ENCODE measurements at regions of chr12 and their contacts with region 1.

Region 1: DNA sequence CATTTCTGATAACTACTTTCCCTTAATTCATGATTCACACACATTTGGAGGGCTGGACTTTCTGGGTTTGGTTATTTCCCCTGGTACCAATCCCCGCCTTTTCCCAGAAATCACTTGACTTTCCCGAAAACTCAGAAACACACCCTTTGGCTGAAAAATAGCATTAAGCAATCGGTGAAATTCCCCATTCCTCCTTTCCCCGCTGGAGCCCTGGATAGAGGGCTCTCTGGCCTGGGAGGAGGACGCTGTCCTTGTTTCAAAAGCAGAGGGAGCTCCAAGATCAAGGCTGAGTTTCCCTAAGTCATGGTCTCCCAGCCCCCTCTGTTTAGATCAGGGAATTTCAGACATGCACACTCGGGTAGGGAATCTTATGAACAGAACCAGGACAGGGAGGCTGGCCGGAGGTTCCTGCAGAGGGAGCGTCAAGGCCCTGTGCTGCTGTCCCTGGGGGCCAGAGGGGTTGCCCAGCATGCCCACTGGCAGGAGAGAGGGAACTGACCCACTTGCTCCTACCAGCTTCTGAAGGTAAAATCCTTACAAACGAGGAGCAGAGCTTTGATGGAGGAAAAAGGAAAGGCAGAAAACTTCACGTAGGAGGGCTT is at the start of gene C1S:
- DNase-seq: peak; percentile 97
- H3K4me3 ChIP-seq: peak within 1 kb of the TSS; percentile 69
- H3K27ac ChIP-seq: peak within 1 kb of the TSS; percentile 94
- H3K27me3 ChIP-seq: peaks cover 3% of the 10 kb centered on the region
- CTCF ChIP-seq: peak; percentile 92
- polyA plus RNA-seq, gene C1S: 406 and 458 TPM in 2 replicates

Region 2: DNA sequence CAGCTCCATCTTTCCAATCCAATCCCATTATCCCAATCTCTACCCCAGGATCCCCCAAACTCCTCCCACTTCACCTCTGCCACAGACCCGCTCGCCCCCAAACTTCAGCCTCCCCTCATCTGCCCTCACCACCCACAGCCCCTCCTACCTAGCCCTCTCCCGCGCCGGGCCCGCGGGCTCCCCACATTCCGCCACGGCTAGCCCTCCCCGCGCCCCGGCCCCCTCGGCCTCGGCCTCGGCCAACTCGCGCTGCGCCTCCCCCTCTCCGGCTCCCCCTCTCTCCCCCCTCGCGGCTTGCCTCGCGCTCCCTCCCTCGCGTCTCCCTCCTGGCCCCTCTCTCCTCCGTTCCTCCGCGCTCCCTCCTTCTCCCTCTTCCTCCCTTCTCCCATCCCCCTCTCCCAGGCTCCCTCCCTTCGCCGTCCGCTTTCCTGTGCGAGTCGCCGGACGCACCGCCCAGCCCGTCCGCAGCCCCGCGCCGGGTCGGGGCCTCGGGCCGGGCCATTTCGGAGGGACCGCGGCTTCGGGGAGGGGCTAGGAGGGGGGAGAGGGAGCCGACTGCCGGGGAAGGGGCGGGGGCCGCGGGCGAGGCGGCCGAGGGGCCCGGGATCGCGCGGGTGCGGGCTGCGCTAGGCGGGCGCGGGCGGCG is 133.0 kb before region 1 on chr12 and contains the start of gene ATN1:
- CTCF ChIA-PET with region 1: no interaction called
- POLR2A ChIA-PET with region 1: no interaction called
- DNase-seq: peak; percentile 47
- H3K4me3 ChIP-seq: peak within 1 kb of the TSS; percentile 68
- H3K27ac ChIP-seq: peak within 1 kb of the TSS; percentile 90
- H3K27me3 ChIP-seq: no peaks in the 10 kb centered on the region
- CTCF ChIP-seq: no peak
- polyA plus RNA-seq, gene ATN1: 11.2 and 21.4 TPM in 2 replicates

Region 3: DNA sequence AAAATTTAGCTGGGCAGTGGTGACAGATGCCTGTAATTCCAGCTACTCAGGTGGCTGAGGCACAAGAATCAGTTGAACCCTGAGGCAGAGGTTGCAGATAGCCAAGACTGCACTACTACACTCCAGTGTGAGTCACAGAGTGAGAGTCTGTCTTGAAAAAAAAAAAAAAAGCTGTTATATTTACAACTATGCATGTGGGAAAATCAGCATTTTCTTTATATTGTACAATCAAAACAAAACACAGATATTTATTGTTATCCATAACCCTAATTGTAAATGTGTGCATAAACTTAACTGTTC is 19.3 kb after region 1 on chr12:
- CTCF ChIA-PET with region 1: interaction called, 12 read pairs
- POLR2A ChIA-PET with region 1: interaction called, 11 read pairs
- DNase-seq: peak; percentile 23
- H3K4me3 ChIP-seq: no peak overlapping the region
- H3K27ac ChIP-seq: peak overlapping the region; percentile 88
- H3K27me3 ChIP-seq: no peaks in the 10 kb centered on the region
- CTCF ChIP-seq: no peak

Region 4: DNA sequence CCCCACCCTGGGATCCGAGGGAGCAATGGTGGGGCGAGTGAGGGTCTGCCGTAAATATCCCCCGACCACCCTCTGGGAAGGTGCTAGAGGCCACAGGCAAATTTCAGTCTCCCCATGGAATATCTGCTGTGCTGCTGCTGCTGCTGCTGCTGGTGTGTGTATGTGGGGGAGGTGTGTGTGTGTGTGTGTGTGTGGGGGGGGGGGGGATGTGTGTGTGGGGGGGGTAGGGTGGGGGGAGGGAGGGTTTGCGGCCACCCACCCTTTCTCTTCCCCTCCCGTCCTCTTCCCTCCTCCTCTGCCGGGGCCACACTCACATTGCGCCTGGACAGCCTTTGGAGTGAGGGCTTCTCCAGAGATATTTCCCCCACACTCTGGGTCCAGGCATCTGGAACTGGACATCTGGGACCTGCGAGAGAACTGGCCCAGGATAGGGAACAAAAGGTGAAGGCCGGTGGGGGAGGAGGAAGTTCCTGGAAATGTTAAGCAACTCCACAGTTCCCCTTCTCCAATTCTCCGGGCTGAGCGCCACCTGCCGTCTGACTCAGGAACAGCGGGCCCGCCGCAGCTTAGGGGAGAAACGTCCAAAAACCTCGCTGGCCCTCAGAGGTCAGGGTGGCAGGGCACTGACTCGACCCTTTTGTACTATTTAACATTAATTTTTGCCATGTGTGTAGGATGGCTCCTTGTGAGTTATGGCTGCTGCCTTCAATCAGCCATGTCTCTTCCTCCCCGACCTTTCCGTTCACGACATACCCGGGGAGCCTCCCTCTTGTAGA is 48.5 kb after region 1 on chr12 and contains the start of gene C1RL:
- CTCF ChIA-PET with region 1: interaction called, 33 read pairs
- POLR2A ChIA-PET with region 1: interaction called, 11 read pairs
- DNase-seq: no peak
- H3K4me3 ChIP-seq: peak within 1 kb of the TSS; percentile 82
- H3K27ac ChIP-seq: peak within 1 kb of the TSS; percentile 96
- H3K27me3 ChIP-seq: no peaks in the 10 kb centered on the region
- CTCF ChIP-seq: peak; percentile 97
- polyA plus RNA-seq, gene C1RL: 45.3 and 58.7 TPM in 2 replicates